Panc1 (cell line): ENCODE measurements at regions of chr11 and their contacts with region 1.

Region 1: DNA sequence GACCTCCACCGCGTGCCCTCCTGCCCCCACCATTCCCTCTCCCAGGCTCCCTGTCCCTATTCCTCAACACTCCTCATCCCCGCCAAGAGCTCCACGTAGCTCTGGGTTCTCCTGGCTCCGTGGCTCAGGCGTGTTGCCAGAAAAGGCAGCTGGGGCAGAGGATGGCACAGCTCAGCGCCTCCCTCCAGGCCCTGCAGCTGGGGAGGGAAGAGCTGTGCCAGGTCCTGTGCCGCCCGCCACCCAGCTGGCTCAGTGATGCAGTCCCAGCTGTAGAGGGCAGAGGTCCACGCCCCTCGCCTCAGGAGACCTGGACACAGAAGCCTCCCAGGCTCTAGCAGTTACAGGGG is 4.2 kb downstream of the ARHGAP1 start:
- DNase-seq: no peak
- ATAC-seq: no peak
- H3K4me3 ChIP-seq: no peak overlapping the region
- H3K27ac ChIP-seq: no peak overlapping the region
- H3K4me1 ChIP-seq: no peaks in the 10 kb centered on the region; the same call in 1 of the 2 replicates
- H3K27me3 ChIP-seq: no peaks in the 10 kb centered on the region
- CTCF ChIP-seq: no peak

Region 2: DNA sequence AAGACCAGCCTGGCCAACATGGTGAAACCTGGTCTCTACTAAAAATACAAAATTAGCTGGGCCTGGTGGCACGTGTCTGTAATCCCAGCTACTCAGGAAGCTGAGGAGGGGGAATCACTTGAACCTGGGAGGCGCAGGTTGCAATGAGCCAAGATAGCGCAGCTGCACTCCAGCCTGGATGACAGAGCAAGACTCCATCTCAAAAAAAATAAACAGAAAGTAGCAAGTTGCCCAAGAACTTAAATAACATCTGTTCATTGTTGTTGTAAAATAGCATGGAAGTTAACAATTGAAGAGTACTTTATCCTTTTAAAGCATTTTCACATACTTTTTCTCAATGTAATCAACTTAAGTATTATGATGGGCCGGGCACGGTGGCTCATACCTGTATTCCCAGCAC is 108.1 kb before region 1 on chr11:
- CTCF ChIA-PET with region 1: no interaction called
- POLR2A ChIA-PET with region 1: interaction called, 11 read pairs
- in situ Hi-C with region 1: no loop called
- intact Hi-C with region 1: no loop called
- DNase-seq: no peak
- ATAC-seq: no peak
- H3K4me3 ChIP-seq: no peak overlapping the region
- H3K27ac ChIP-seq: no peak overlapping the region
- H3K4me1 ChIP-seq: peaks cover 25% of the 10 kb centered on the region
- H3K27me3 ChIP-seq: no peaks in the 10 kb centered on the region
- CTCF ChIP-seq: no peak

Region 3: GRCh38 chr11:46659908-46660307 is 36.3 kb before region 1 on chr11:
- CTCF ChIA-PET with region 1: no interaction called
- POLR2A ChIA-PET with region 1: interaction called, 10 read pairs
- in situ Hi-C with region 1: no loop called
- intact Hi-C with region 1: no loop called
- DNase-seq: no peak
- ATAC-seq: no peak
- H3K4me3 ChIP-seq: no peak overlapping the region
- H3K27ac ChIP-seq: no peak overlapping the region
- H3K4me1 ChIP-seq: no peaks in the 10 kb centered on the region
- H3K27me3 ChIP-seq: no peaks in the 10 kb centered on the region
- CTCF ChIP-seq: no peak